ENCODE measurements at regions of chr16 and their contacts with region 1.

Region 1: GRCh38 chr16:48365581-48366164 is 19.5 kb downstream of the SIAH1 start:
- DNase-seq: peak; percentile 91
- H3K4me3 Mint-ChIP-seq: peak overlapping the region; percentile 85
- H3K27ac Mint-ChIP-seq: peak overlapping the region; percentile 94
- H3K4me1 Mint-ChIP-seq: peaks cover 41% of the 10 kb centered on the region
- H3K27me3 Mint-ChIP-seq: no peaks in the 10 kb centered on the region

Region 2: GRCh38 chr16:48353565-48354163 is 12.0 kb before region 1 on chr16:
- CTCF ChIA-PET with region 1: interaction called, 12 read pairs
- POLR2A ChIA-PET with region 1: interaction called, 3 read pairs
- intact Hi-C with region 1: loop called (anchors 1 kb)
- DNase-seq: peak; percentile 77
- H3K4me3 Mint-ChIP-seq: no peak overlapping the region
- H3K27ac Mint-ChIP-seq: peak overlapping the region; percentile 43
- H3K4me1 Mint-ChIP-seq: peaks cover 20% of the 10 kb centered on the region
- H3K27me3 Mint-ChIP-seq: no peaks in the 10 kb centered on the region

Region 3: DNA sequence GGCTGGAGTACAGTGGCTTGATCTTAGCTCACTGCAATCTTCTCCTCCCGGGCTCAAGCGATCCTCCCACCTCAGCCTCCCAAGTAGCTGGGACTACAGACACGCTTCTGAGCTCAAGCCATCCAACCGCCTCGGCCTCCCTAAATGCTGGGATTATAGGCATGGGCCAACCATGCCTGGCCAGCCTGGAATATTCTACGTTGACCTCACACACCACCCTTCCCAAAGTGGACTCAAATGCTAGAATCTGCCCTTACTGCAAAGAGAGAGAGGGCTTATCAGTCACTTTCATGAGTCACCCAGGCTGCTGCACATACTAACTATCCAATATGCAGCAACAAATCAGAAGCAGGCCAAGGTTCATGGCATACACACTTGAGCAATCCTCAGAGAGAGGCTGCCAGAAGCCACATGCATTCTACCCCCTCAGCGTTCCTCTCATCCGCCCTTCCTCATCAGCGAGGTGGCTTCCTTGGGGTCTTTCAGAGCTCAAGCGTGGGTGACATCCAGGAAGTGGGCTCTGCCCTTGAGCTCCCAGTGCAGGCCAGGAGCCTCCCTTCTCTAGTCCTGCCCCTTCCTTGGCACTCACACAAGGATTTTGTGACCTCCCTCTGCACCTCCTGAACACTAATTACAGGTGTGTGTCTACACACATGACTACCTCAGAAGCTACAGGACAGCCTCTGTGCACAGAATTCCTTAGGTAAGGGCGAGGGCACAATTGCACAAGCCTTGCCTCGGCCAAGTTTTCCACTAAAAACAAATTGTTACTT is 44.4 kb after region 1 on chr16:
- CTCF ChIA-PET with region 1: no interaction called
- POLR2A ChIA-PET with region 1: no interaction called
- intact Hi-C with region 1: loop called (anchors 2 kb)
- DNase-seq: no peak
- H3K4me3 Mint-ChIP-seq: no peak overlapping the region
- H3K27ac Mint-ChIP-seq: no peak overlapping the region
- H3K4me1 Mint-ChIP-seq: peaks cover 6% of the 10 kb centered on the region
- H3K27me3 Mint-ChIP-seq: peaks cover 8% of the 10 kb centered on the region

Region 4: GRCh38 chr16:48632137-48632774 is 266.6 kb after region 1 on chr16:
- CTCF ChIA-PET with region 1: interaction called, 17 read pairs
- POLR2A ChIA-PET with region 1: interaction called, 9 read pairs
- intact Hi-C with region 1: no loop called
- DNase-seq: no peak
- H3K4me3 Mint-ChIP-seq: no peak overlapping the region
- H3K27ac Mint-ChIP-seq: no peak overlapping the region
- H3K4me1 Mint-ChIP-seq: peaks cover 8% of the 10 kb centered on the region
- H3K27me3 Mint-ChIP-seq: peaks cover 2% of the 10 kb centered on the region